ENCODE measurements at regions of chr1 and their contacts with region 1.

Region 1: GRCh38 chr1:147892731-147893214 is 9.8 kb upstream of the GJA8 start:
- DNase-seq: peak; percentile 24
- H3K4me3 ChIP-seq: no peak overlapping the region
- H3K27ac ChIP-seq: no peak overlapping the region
- H3K27me3 ChIP-seq: peaks cover 11% of the 10 kb centered on the region
- CTCF ChIP-seq: peak; percentile 99

Region 2: GRCh38 chr1:147868953-147869352 is 23.8 kb before region 1 on chr1:
- CTCF ChIA-PET with region 1: interaction called, 13 read pairs
- POLR2A ChIA-PET with region 1: no interaction called
- DNase-seq: no peak
- H3K4me3 ChIP-seq: no peak overlapping the region
- H3K27ac ChIP-seq: no peak overlapping the region
- H3K27me3 ChIP-seq: no peaks in the 10 kb centered on the region
- CTCF ChIP-seq: no peak

Region 3: GRCh38 chr1:147878022-147878421 is 14.8 kb before region 1 on chr1:
- CTCF ChIA-PET with region 1: interaction called, 30 read pairs
- POLR2A ChIA-PET with region 1: no interaction called
- DNase-seq: no peak
- H3K4me3 ChIP-seq: no peak overlapping the region
- H3K27ac ChIP-seq: no peak overlapping the region
- H3K27me3 ChIP-seq: no peaks in the 10 kb centered on the region
- CTCF ChIP-seq: no peak

Region 4: GRCh38 chr1:147919896-147920295 is 27.1 kb after region 1 on chr1:
- CTCF ChIA-PET with region 1: interaction called, 11 read pairs
- POLR2A ChIA-PET with region 1: no interaction called
- DNase-seq: no peak
- H3K4me3 ChIP-seq: no peak overlapping the region
- H3K27ac ChIP-seq: no peak overlapping the region
- H3K27me3 ChIP-seq: peaks cover 4% of the 10 kb centered on the region
- CTCF ChIP-seq: no peak